ENCODE measurements at regions of chr2 and their contacts with region 1.

Region 1: DNA sequence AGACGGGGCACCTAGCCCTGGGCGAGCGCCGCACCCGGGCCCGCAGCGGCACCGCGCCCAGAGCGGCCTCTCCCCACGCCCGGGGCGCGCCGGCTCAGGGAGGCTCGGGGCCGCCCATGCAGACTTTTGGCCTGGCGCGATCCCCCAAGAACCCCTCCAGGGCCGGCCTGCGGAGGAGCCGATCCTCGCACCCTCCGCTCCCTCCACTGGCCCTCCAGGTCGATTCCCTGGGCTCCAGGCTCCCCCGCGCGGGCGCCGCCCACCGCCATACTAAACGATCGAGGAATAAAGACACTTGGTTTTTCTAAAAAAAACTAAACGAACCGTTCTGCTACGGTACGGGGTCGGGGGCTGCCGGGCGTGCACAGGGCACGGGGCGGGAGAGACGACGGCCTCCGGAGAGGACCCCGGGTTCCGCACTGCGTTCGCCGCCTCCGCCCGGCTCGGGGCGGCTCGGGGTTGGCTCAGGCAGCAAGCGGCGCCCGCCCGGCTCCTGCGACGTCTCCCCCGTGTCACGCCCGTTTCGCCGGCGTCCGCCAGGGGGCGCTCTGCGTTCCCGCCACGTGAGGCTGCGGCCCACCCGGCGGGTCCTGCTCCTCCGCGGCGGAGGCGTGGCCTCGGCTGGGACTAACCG is 365 bp upstream of the KHK start:
- DNase-seq: peak; percentile 73
- ATAC-seq: peak; percentile 92
- H3K4me3 ChIP-seq: peak overlapping the region; percentile 85
- H3K27ac ChIP-seq: peak overlapping the region; percentile 67
- H3K4me1 ChIP-seq: peaks cover 19% of the 10 kb centered on the region
- H3K27me3 ChIP-seq: no peaks in the 10 kb centered on the region
- CTCF ChIP-seq: peak; percentile 77 to 95 (median 83)
- EP300 ChIP-seq: no peak
- POLR2A ChIP-seq: peak; percentile 80
- RAD21 ChIP-seq: peak; percentile 47

Region 2: GRCh38 chr2:26959331-26959730 is 126.9 kb before region 1 on chr2:
- CTCF ChIA-PET with region 1: interaction called, 85 read pairs
- POLR2A ChIA-PET with region 1: interaction called, 3 read pairs
- RAD21 ChIA-PET with region 1: interaction called, 14 read pairs
- SMC1A ChIA-PET with region 1: interaction called, 6 read pairs
- in situ Hi-C with region 1: loop called (anchors 10 kb)
- intact Hi-C with region 1: loop called (anchors 1 kb)
- DNase-seq: no peak
- ATAC-seq: no peak
- H3K4me3 ChIP-seq: no peak overlapping the region
- H3K27ac ChIP-seq: no peak overlapping the region
- H3K4me1 ChIP-seq: no peaks in the 10 kb centered on the region
- H3K27me3 ChIP-seq: no peaks in the 10 kb centered on the region; a peak in 2 of 4 replicates
- CTCF ChIP-seq: no peak
- EP300 ChIP-seq: no peak
- POLR2A ChIP-seq: no peak
- RAD21 ChIP-seq: no peak

Region 3: DNA sequence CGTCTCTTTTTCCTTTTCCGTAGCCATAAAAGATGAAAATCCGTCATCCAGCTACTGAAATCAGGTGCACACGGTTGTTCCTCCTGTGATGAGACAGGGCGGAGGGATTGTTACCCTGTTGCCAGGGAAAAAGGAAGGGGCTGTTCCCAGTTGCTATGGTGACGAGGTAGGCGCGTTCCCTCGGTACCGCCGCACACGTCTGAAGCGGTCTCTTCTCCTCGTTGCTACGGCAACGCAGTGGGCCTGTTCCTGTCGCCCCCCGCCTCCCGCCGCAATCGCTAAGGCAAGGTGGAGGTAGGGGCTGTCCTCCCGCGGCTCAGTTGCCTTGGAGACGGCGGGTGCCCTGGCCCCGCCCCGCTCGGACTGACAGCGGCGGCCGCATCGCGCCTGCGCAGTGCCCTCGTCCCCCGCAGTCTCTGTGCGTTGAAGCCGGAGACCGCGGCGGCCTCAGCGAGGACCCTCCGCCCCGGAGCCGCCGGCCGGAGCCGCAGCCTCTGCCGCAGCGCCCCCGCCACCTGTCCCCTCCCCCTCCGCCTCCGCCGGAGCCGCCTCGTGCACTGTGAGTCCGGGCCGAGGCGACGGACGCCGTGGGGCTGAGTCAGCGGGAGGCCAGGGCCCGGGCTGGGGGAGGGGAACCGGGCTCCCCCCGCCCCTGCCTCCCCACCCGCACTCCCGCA is 115.8 kb before region 1 on chr2 and contains the start of gene MAPRE3:
- CTCF ChIA-PET with region 1: interaction called, 85 read pairs
- POLR2A ChIA-PET with region 1: no interaction called
- RAD21 ChIA-PET with region 1: interaction called, 4 read pairs
- SMC1A ChIA-PET with region 1: interaction called, 3 read pairs
- in situ Hi-C with region 1: loop called (anchors 10 kb)
- intact Hi-C with region 1: no loop called
- DNase-seq: no peak
- ATAC-seq: peak; percentile 97
- H3K4me3 ChIP-seq: peak within 1 kb of the TSS; percentile 67
- H3K27ac ChIP-seq: no peak within 1 kb of the TSS
- H3K4me1 ChIP-seq: no peaks in the 10 kb centered on the region
- H3K27me3 ChIP-seq: peaks cover 1 to 2% of the 10 kb centered on the region in 2 experiments; a peak in 3 of 4 replicates
- CTCF ChIP-seq: no peak
- EP300 ChIP-seq: no peak
- POLR2A ChIP-seq: no peak
- RAD21 ChIP-seq: no peak
- polyA plus RNA-seq, gene MAPRE3: 0.03 TPM in 1 of 2 experiments, not detected in the other

Region 4: GRCh38 chr2:27060323-27060722 is 25.9 kb before region 1 on chr2:
- CTCF ChIA-PET with region 1: no interaction called
- POLR2A ChIA-PET with region 1: no interaction called
- RAD21 ChIA-PET with region 1: no interaction called
- SMC1A ChIA-PET with region 1: no interaction called
- in situ Hi-C with region 1: no loop called
- intact Hi-C with region 1: no loop called
- DNase-seq: no peak
- ATAC-seq: no peak
- H3K4me3 ChIP-seq: no peak overlapping the region
- H3K27ac ChIP-seq: no peak overlapping the region
- H3K4me1 ChIP-seq: no peaks in the 10 kb centered on the region
- H3K27me3 ChIP-seq: no peaks in the 10 kb centered on the region
- CTCF ChIP-seq: no peak
- EP300 ChIP-seq: no peak
- POLR2A ChIP-seq: peak; percentile 43; the same call in 1 of the 2 replicates
- RAD21 ChIP-seq: no peak

Region 5: GRCh38 chr2:27071277-27071989 is 14.8 kb before region 1 on chr2 and contains the start of gene OST4:
- CTCF ChIA-PET with region 1: interaction called, 36 read pairs
- POLR2A ChIA-PET with region 1: interaction called, 43 read pairs
- RAD21 ChIA-PET with region 1: interaction called, 22 read pairs
- SMC1A ChIA-PET with region 1: interaction called, 11 read pairs
- in situ Hi-C with region 1: no loop called
- intact Hi-C with region 1: no loop called
- DNase-seq: no peak
- ATAC-seq: peak; percentile 91
- H3K4me3 ChIP-seq: peak within 1 kb of the TSS; percentile 85
- H3K27ac ChIP-seq: peak within 1 kb of the TSS; percentile 94
- H3K4me1 ChIP-seq: peaks cover 37% of the 10 kb centered on the region
- H3K27me3 ChIP-seq: no peaks in the 10 kb centered on the region
- CTCF ChIP-seq: no peak
- EP300 ChIP-seq: no peak
- POLR2A ChIP-seq: peak; percentile 98
- RAD21 ChIP-seq: no peak
- polyA plus RNA-seq, gene OST4: 1,505 to 1,543 TPM

Region 6: DNA sequence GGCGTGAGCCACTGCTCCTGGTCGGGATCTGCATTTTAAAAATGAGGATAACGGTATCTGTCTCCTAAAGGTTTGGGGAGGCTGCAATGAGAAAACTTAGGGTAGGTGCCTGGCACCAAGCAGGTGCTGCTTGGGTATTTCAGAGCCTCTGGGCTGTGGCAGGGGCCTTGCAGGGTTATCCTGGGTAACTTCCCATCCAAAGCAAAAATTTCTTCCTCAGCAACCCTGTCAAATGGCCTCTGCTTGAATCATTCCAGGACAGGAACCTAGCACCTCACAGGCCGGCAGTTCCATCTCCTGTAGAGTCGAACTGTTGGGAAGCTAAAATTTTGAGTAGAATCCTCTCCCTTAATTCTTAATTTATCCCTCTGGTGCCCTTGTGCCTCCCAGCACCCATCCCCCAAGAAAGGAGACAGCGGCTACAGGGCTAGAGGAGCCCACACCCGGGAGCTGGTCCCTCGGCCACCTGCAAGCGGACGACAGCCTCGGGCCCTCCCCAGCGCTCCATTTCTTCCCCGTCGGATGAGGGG is 31.9 kb after region 1 on chr2:
- CTCF ChIA-PET with region 1: no interaction called
- POLR2A ChIA-PET with region 1: no interaction called
- RAD21 ChIA-PET with region 1: no interaction called
- SMC1A ChIA-PET with region 1: no interaction called
- in situ Hi-C with region 1: no loop called
- intact Hi-C with region 1: no loop called
- DNase-seq: no peak
- ATAC-seq: no peak
- H3K4me3 ChIP-seq: no peak overlapping the region
- H3K27ac ChIP-seq: no peak overlapping the region
- H3K4me1 ChIP-seq: no peaks in the 10 kb centered on the region; the same call in 1 of the 2 replicates
- H3K27me3 ChIP-seq: peaks cover 6 to 7% of the 10 kb centered on the region in 2 experiments
- CTCF ChIP-seq: no peak
- EP300 ChIP-seq: no peak
- POLR2A ChIP-seq: no peak
- RAD21 ChIP-seq: no peak